Astrocyte of the cerebellum (primary cell): ENCODE measurements at regions of chr17 and their contacts with region 1.

Region 1: DNA sequence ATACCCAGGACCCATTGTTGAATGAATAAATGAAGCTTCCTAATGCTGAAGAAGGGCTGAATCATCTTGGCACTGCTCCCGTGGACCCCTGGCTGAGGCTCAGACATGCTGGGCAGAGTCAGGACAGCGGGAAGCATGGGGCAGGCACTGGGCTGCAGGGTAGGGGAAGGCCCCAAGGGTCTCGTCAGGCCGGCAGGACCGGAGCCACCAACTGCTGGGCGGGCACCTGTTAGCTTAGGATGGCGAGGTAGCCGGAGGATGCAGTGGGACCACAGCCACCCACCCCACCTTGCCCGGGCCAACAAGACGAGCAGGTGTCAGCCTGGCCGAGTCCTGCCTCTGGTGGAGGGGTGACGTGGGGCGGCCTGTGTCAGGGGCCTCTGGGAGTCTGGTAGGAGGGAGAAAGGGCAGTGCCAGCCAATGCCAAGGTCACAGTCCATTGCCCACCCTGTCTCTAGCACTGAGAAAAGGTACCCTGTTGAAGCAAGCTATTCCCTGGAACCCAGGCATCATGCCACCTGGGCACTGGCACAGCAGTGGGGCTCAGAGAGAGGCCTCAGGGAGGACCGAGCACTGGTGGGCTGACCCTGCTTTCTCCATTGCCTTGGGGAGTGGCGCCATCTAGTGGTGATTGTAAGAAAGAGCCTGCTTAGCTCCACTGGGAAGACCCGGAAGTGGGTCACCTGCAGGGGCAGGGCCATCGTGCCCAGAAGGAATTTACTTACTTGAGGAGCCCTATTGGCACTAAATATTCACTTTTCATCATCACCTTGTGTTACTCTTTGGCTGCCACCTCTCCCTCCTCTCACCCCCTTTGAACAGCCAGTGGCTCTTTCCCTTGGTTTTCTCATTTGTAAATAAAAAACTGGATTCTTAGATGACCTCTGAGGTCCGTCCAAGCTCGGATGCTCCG is 3.0 kb upstream of the DLX3 start:
- DNase-seq: peak; percentile 74
- H3K4me3 ChIP-seq: no peak overlapping the region
- CTCF ChIP-seq: peak; percentile 91

Region 2: GRCh38 chr17:49515196-49515770 is 482.8 kb before region 1 on chr17:
- in situ Hi-C with region 1: loop called (anchors 25 kb)
- DNase-seq: peak; percentile 98
- H3K4me3 ChIP-seq: no peak overlapping the region
- CTCF ChIP-seq: peak; percentile 32

Region 3: DNA sequence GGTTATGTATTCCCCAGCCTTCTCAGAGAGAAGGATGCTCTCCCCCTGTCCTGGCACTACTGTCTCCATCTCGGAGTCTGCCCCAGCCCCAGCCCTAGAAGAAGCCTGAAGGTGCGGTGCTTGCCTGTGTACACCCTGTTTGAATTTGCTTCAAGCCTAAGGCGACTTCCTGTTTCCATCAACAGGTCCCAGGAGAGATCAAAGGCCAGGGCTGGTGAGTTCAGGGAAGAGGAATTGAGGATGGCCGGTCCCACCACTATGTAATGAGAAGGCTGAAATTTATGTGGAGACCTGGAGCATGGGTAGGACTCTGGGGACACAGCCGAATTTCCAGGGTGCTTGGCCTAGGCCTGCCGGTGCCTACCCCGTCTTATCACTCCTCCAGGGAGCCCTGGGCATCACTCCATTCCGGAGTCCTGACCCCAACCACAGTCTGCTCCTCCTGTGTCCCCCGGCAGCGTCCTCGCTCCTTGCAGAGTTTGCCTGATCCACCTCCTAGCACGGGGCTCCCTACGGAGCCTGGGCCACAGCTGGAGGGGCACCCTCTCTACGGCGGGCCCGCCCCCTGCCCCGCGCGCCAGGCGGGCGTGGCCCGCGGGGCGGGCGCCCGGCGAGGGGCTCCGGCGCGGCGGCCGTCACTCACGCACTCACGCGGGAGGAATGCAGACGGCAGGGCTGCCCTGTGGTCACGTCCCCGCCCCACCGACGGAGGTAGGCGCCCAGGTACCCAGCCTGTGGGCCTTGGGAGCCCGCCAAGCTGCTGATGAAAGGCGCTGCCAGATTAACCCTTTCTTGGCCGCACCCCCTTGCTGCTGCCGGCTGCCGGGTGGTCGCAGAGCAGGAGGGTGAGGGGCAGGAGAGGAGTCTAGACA is 96.4 kb before region 1 on chr17:
- in situ Hi-C with region 1: loop called (anchors 5 kb)
- DNase-seq: no peak
- H3K4me3 ChIP-seq: no peak overlapping the region
- CTCF ChIP-seq: no peak

Region 4: GRCh38 chr17:49944273-49944890 is 53.7 kb before region 1 on chr17:
- in situ Hi-C with region 1: no loop called
- DNase-seq: no peak
- H3K4me3 ChIP-seq: no peak overlapping the region
- CTCF ChIP-seq: no peak

Region 5: DNA sequence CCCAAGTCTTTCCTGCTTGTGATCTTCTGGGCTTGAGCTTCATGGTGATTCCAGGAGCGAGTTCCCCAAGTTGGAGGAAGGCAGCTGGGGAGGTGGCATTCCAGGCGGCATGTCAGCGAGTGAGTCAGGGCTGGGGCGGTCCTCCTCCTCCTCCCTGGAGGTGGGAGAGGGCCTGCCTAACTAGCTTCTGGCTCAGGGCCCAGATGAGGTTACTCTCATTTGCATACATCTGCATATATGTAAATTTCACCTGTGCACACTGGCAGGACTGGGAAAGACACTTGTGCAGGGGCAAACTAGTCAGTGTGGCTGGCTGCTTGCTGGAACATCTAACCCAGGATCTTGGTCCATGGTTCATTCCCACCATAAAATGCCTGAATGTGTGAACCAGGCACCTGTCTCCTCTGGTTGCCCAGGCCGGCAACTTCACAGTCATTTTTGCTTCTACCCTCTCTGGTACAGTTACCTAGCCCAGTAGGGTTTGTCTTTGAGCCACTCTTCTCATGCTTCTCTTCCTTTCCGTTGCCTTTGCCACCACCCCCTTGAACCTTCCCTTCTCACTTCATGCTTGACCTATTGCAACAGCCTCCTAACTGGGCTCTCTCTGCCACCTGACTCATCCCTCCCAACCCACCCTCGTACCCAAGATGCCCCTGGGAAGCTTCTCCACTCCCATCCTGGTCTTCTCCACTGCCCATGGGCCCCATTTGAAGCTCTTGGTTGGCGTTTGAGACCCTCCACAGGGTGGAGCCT is 38.7 kb before region 1 on chr17:
- in situ Hi-C with region 1: loop called (anchors 5 kb)
- DNase-seq: no peak
- H3K4me3 ChIP-seq: no peak overlapping the region
- CTCF ChIP-seq: no peak